ENCODE measurements at regions of chr12 and their contacts with region 1.

Region 1: DNA sequence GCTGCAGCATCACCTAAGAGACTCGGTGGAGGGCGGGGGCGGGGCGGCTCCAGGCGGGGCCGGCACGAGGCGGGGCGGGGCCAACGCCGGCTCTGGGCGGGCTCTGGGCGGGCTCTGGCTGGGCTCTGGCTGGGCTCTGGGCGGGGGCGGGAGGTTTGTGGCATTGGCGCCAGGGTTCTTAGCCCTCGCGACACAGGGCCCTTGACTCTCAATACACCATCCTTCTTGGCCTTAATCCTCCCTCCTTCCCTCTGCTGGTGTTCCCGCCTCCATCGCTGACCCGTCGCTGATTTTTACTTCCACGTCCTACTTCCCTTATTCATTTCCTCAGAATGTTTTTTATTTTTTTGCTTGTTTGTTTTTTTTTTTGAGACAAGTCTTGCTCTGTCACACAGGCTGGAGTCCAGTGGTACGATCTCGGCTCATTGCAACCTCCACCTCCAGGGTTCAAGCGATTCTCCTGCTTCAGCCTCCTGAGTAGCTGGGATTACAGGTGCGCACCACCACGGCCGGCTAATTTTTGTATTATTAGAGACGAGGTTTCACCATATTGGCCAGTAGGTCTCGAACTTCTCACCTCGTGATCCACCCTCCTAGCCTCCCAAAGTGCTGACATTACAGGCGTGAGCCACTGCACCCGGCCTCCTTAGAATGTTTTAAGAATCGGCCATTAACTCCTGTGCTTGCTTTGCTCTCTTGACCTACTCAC is at the start of gene BLTP3B:
- DNase-seq: peak; percentile 54
- ATAC-seq: peak; percentile 87
- H3K4me3 ChIP-seq: peak within 1 kb of the TSS; percentile 89 to 94
- H3K27ac ChIP-seq: peak within 1 kb of the TSS; percentile 73
- H3K4me1 ChIP-seq: peaks cover 4 to 24% of the 10 kb centered on the region in 2 experiments; a peak in 3 of 4 replicates
- H3K27me3 ChIP-seq: no peaks in the 10 kb centered on the region
- CTCF ChIP-seq: no peak
- POLR2A ChIP-seq: peak; percentile 35
- RAD21 ChIP-seq: no peak
- total RNA-seq, gene BLTP3B: 24.5 TPM

Region 2: GRCh38 chr12:100200463-100201181 is 57.6 kb after region 1 on chr12 and contains the start of gene ACTR6:
- CTCF ChIA-PET with region 1: interaction called, 3 read pairs
- POLR2A ChIA-PET with region 1: no interaction called
- RAD21 ChIA-PET with region 1: no interaction called
- intact Hi-C with region 1: loop called (anchors 2 kb)
- DNase-seq: peak; percentile 92
- ATAC-seq: peak; percentile 80
- H3K4me3 ChIP-seq: peak within 1 kb of the TSS; percentile 84 to 94
- H3K27ac ChIP-seq: peak within 1 kb of the TSS; percentile 72
- H3K4me1 ChIP-seq: peaks cover 8 to 34% of the 10 kb centered on the region in 2 experiments
- H3K27me3 ChIP-seq: no peaks in the 10 kb centered on the region
- CTCF ChIP-seq: no peak
- POLR2A ChIP-seq: peak; percentile 91
- RAD21 ChIP-seq: no peak
- total RNA-seq, gene ACTR6: 40.4 TPM

Region 3: GRCh38 chr12:100266835-100267618 is 124.0 kb after region 1 on chr12 and contains the starts of genes DEPDC4 and SCYL2:
- CTCF ChIA-PET with region 1: no interaction called
- POLR2A ChIA-PET with region 1: no interaction called
- RAD21 ChIA-PET with region 1: no interaction called
- intact Hi-C with region 1: loop called (anchors 5 kb)
- DNase-seq: peak; percentile 92
- ATAC-seq: peak; percentile 90
- H3K4me3 ChIP-seq: peak within 1 kb of the TSS; percentile 79 to 92
- H3K27ac ChIP-seq: peak within 1 kb of the TSS; percentile 89
- H3K4me1 ChIP-seq: peaks cover 3 to 18% of the 10 kb centered on the region in 2 experiments; a peak in 3 of 4 replicates
- H3K27me3 ChIP-seq: no peaks in the 10 kb centered on the region
- CTCF ChIP-seq: no peak
- POLR2A ChIP-seq: peak; percentile 34
- RAD21 ChIP-seq: no peak
- total RNA-seq, gene DEPDC4: 3.4 TPM
- total RNA-seq, gene SCYL2: 31.7 TPM

Measured in HCT116 (cell line).